ENCODE measurements at regions of chr17 and their contacts with region 1.

Region 1: GRCh38 chr17:6651357-6651918 is at the starts of genes C17orf100 and MED31:
- DNase-seq: peak; percentile 99
- total RNA-seq, gene C17orf100: 0.48 TPM
- total RNA-seq, gene MED31: 15.6 TPM

Region 2: DNA sequence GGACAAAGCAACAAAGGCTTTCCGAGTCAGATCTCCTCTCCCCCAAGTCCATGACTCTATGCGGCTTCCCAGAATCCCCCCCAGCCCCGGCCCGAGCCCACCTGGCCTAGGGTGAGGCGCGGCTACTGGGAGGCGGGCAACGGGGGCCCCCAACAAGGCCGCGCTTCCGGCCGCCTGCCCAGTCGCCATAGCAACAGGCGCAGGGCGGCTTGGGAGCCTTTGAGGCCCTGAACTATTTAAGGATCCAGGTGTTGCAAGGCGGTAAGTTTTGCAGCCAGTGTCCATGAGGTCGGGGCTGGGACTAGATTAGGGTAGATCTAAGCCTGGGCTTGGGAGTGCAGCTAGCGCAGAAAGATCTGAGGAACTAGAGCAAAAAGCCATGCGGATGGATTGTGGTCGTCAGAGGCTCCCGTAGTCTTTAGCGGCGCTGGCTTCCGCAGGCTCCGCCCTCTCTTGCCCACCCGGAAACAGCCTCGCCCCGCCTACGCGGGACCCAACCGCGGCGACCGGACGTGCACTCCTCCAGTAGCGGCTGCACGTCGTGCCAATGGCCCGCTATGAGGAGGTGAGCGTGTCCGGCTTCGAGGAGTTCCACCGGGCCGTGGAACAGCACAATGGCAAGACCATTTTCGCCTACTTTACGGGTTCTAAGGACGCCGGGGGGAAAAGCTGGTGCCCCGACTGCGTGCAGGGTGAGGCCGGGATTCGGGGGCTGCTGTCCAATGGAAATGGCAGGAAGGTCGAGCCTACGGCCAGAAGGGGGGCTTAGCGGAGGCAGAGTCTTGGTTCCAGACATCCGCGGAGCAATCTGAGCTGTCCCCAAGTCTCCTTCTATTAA is 10.7 kb before region 1 on chr17 and contains the starts of genes KIAA0753 and TXNDC17:
- intact Hi-C with region 1: loop called (anchors 1 kb)
- DNase-seq: peak; percentile 97
- total RNA-seq, gene KIAA0753: 7.8 TPM
- total RNA-seq, gene TXNDC17: 51.0 TPM

Region 3: GRCh38 chr17:6701719-6702118 is 50.3 kb after region 1 on chr17:
- intact Hi-C with region 1: no loop called
- DNase-seq: no peak

Region 4: GRCh38 chr17:7014261-7014994 is 363.0 kb after region 1 on chr17:
- intact Hi-C with region 1: loop called (anchors 5 kb)
- DNase-seq: peak; percentile 99

Measured in cardiac septum (tissue), 1 donor.